Psoas muscle (tissue), 8 donors: ENCODE measurements at regions of chr3 and their contacts with region 1.

Region 1: DNA sequence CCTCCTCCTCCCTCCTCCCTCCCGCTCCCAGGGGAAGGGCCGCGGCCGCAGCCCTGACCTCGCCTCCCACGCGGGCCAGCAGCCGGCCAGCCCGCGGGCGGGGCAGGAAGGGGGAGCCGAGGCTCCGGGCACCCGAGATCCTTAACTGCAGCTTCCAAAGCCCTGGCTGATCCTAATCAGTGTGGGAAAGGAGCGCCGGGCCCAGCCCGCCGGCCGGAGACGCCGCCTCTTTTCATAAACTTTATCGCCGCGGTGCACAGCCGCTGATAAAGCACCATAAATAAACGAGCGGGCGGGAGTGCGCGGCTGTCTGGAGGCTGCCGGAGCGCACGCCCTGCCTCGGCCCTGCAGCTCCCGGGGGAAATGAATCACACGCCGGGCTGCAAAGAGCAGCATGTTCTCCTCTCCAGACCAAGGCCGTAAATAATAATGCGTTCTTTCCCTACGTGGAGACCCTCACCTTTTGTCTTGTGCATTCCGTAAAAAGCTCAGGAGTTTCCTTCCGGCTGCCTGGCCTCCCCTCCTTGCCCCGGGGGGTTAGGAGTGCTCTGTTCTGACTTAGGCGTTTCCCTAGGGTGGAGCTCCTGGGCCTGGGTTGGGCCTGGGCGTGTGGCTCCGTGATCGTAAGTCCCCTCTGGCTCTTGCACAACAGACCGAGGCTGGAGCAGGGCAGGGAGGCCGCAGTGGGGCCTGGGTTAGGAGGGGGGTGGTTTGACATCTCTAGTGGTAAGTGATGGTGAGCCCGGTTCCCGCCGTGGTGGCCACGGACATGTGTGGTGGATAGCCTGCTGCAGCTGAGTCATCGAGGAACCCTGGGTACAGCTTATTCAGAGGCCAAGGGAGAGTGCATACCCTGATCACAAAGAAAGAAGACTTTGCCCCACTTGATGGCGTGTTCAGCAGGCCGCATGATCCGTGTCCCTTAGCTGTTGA is 132.6 kb upstream of the HES1 start:
- DNase-seq: peak; percentile 89 to 95
- ATAC-seq: peak; percentile 78 to 91 (median 82)
- H3K4me3 ChIP-seq: peak overlapping the region; percentile 60
- H3K27ac ChIP-seq: peak overlapping the region; percentile 88
- H3K4me1 ChIP-seq: peaks cover 47% of the 10 kb centered on the region
- H3K27me3 ChIP-seq: no peaks in the 10 kb centered on the region
- CTCF ChIP-seq: no peak

Region 2: DNA sequence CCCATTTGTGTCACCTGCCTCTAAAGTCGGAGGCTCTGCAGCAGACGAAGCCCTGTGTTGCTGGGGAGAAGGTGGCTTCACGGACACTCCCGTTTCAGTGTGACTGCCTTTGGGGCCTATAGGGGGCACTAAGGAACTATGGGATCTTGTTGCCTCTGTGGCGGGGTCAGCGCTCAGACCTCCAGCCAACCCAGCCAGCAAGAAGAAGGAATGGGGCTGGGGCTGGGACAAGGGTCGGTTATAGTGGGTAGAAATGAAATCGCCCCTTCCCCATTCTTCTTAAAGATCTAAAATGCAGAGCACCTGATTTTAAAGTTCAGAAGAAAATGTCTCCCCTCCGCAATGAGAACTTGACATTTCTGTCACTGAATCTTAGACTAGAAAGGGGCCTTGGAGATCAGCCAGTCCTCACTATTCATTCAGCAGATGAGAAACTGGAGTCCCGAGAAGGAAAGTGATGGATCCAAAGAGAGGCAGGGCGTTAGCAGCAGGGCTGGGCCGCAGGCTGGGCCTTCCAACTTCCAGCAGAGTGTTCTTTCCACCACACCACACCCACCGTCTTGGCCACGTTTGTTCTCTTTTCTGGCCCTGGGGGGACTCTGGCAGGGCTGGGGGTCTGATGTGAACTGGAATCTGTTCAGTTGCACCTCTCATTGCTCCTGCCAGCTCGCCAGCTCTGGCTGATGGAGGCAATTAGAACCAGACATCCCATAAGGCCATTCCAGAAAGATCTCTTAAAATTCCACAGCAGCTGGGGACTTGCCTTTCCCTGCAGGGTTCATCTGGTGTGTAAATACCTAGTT is 215.0 kb before region 1 on chr3:
- intact Hi-C with region 1: loop called (anchors 5 to 10 kb)
- DNase-seq: peak; percentile 50 to 75
- ATAC-seq: peak; percentile 95 to 99 (median 96)
- H3K4me3 ChIP-seq: no peak overlapping the region
- H3K27ac ChIP-seq: no peak overlapping the region
- H3K4me1 ChIP-seq: no peaks in the 10 kb centered on the region
- H3K27me3 ChIP-seq: peaks cover 0 to 4% (median 0%) of the 10 kb centered on the region in 3 donors
- CTCF ChIP-seq: peak; percentile 81

Region 3: GRCh38 chr3:194046995-194047645 is 43.7 kb after region 1 on chr3:
- intact Hi-C with region 1: loop called in 1 of 2 experiments (anchors 5 kb)
- DNase-seq: peak; percentile 75 to 89
- ATAC-seq: peak; percentile 98 to 99 (median 98)
- H3K4me3 ChIP-seq: no peak overlapping the region
- H3K27ac ChIP-seq: peak overlapping the region; percentile 48
- H3K4me1 ChIP-seq: peaks cover 8% of the 10 kb centered on the region
- H3K27me3 ChIP-seq: no peaks in the 10 kb centered on the region
- CTCF ChIP-seq: no peak

Region 4: DNA sequence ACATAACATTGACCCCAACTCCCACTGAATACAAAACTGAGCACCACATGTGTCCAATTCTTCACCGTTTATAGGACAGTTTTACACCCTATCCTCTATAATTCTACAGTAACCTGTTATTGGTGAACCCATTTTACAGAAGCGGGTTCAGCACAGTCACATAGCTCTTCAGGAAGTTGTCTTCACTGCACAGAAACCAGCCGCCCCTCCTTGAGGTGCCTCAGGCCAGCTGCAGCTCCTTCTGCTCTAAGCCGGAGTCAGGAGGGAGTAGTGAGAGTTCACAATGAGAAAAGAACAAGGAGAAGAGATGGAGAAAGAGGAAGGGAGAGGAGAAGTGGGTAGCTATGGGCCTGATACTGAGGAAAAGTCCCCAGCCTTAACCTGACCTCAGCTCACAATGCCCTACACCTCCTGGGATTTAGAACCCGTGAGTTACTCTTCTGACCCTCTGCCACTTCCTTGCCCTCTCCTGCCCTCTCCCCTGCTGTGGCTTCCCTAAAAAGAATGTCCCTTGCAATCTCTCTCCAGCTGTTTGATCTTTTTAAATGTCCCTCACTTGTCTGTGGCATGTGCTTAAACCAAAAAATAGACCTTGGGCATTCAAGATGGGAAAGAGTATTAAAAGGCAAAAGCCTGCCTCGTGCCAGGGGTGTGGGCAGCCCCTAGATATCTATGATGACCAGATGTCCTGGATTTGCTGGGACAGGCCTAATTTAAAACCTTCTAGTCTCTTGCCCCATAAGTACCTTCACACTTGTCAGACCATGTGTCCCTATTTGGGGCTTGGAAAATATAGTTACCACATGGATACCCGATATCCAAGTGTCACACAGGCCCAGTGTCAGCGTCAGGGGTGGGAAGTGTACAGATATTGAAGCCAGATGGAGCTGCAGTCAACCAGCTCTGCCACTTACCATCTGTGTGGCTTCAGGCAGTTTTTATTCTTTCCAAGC is 61.3 kb after region 1 on chr3:
- intact Hi-C with region 1: loop called in 1 of 2 experiments (anchors 5 kb)
- DNase-seq: peak in 1 of 2 donors; percentile 69
- ATAC-seq: peak; percentile 91 to 96 (median 94)
- H3K4me3 ChIP-seq: no peak overlapping the region
- H3K27ac ChIP-seq: peak overlapping the region; percentile 81
- H3K4me1 ChIP-seq: peaks cover 32% of the 10 kb centered on the region
- H3K27me3 ChIP-seq: no peaks in the 10 kb centered on the region
- CTCF ChIP-seq: peak; percentile 15

Region 5: GRCh38 chr3:194265483-194265892 is 262.1 kb after region 1 on chr3:
- intact Hi-C with region 1: loop called (anchors 5 to 10 kb)
- DNase-seq: peak; percentile 91 to 97
- ATAC-seq: peak; percentile 95 to 97 (median 97)
- H3K4me3 ChIP-seq: no peak overlapping the region
- H3K27ac ChIP-seq: peak overlapping the region; percentile 64
- H3K4me1 ChIP-seq: peaks cover 25% of the 10 kb centered on the region
- H3K27me3 ChIP-seq: no peaks in the 10 kb centered on the region
- CTCF ChIP-seq: no peak